SK-N-SH (cell line): ENCODE measurements at regions of chr4 and their contacts with region 1.

Region 1: DNA sequence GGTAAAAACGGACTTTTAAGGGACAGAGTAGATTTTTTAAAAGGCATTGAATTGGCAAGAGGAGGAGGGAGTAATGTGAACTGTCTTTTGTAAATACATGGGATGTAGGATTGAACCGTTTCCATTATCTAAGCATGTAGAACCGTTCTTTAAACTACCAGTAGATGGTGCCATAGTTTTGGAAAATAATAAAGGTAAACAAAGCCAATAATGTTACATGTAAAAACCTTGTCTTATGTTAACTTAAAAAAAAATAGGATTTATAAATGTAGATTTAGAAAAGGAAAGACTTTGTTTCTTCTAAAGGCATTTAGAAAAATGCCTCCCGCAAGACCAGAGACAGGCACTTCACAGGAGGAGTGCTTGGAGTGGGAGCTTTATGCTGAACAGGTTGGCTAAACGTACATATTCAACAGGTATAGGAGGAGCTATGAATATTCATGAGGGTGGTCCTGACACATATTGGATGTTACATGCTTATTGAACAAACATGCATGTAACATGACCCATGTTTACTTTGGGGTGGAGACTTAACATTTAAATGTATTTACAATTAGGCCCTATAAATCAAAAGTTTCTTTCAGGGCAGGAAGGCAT is 45.5 kb upstream of the FAM241A start:
- DNase-seq: peak; percentile 52
- H3K4me3 ChIP-seq: no peak overlapping the region
- H3K27ac ChIP-seq: no peak overlapping the region
- H3K4me1 ChIP-seq: no peaks in the 10 kb centered on the region
- H3K27me3 ChIP-seq: no peaks in the 10 kb centered on the region
- CTCF ChIP-seq: peak; percentile 81
- EP300 ChIP-seq: no peak
- RAD21 ChIP-seq: peak; percentile 82

Region 2: GRCh38 chr4:112136551-112136950 is 36.8 kb after region 1 on chr4:
- CTCF ChIA-PET with region 1: interaction called, 15 read pairs
- POLR2A ChIA-PET with region 1: no interaction called
- DNase-seq: no peak
- H3K4me3 ChIP-seq: no peak overlapping the region
- H3K27ac ChIP-seq: no peak overlapping the region
- H3K4me1 ChIP-seq: no peaks in the 10 kb centered on the region
- H3K27me3 ChIP-seq: no peaks in the 10 kb centered on the region
- CTCF ChIP-seq: no peak
- EP300 ChIP-seq: no peak
- RAD21 ChIP-seq: no peak

Region 3: DNA sequence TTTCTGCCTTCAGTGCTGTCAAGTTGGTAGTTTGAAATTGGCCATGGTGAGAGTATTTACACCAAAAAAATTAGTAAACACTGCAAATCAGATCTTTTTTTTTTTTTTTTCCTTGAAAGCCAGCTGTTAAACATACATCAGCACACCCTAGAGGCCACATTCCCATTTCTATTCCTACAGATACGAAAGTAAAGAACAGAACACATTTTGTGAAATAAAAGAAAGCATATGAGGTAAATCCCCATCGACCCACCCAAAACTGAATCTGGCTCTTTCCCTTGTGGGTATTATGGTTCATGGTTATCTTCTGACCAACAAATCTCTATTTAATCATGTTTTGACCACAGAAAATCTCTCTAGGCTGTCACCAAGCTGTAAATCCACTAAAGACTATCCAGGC is 90.0 kb after region 1 on chr4:
- CTCF ChIA-PET with region 1: interaction called, 14 read pairs
- POLR2A ChIA-PET with region 1: no interaction called
- DNase-seq: peak; percentile 30
- H3K4me3 ChIP-seq: no peak overlapping the region
- H3K27ac ChIP-seq: no peak overlapping the region
- H3K4me1 ChIP-seq: no peaks in the 10 kb centered on the region; a peak in 1 of 4 replicates
- H3K27me3 ChIP-seq: no peaks in the 10 kb centered on the region
- CTCF ChIP-seq: peak; percentile 39
- EP300 ChIP-seq: no peak
- RAD21 ChIP-seq: peak; percentile 50

Region 4: GRCh38 chr4:112231779-112232713 is 132.2 kb after region 1 on chr4 and contains the start of gene AP1AR:
- CTCF ChIA-PET with region 1: interaction called, 74 read pairs
- POLR2A ChIA-PET with region 1: no interaction called
- DNase-seq: peak; percentile 92
- H3K4me3 ChIP-seq: peak within 1 kb of the TSS; percentile 87 to 97
- H3K27ac ChIP-seq: peak within 1 kb of the TSS; percentile 96 to 98
- H3K4me1 ChIP-seq: peaks cover 7 to 9% of the 10 kb centered on the region in 2 experiments; a peak in 3 of 4 replicates
- H3K27me3 ChIP-seq: no peaks in the 10 kb centered on the region
- CTCF ChIP-seq: peak; percentile 49
- EP300 ChIP-seq: no peak
- RAD21 ChIP-seq: peak; percentile 23; the same call in 1 of the 2 replicates
- polyA plus RNA-seq, gene AP1AR: 8.5 and 11.4 TPM in 2 replicates

Region 5: DNA sequence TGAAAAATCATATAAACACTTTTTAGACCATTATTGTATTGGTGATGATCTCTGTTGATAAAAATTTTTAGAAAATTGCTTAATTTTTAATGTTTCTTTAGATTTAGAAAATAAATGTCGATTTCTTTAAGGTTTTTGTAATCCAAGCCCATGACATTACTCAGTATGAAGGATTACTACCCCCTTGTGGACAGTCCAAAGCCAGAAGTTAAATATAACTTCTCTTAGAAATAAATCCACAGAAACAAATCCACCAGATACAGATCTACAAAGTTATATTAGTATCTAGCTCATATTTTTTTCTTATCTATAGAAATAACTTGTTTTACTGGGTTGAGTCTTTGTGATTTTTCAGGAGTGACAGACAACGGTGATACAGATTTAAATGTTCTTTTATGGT is 167.0 kb after region 1 on chr4:
- CTCF ChIA-PET with region 1: interaction called, 18 read pairs
- POLR2A ChIA-PET with region 1: no interaction called
- DNase-seq: peak; percentile 12
- H3K4me3 ChIP-seq: no peak overlapping the region
- H3K27ac ChIP-seq: no peak overlapping the region
- H3K4me1 ChIP-seq: peaks cover 0 to 2% of the 10 kb centered on the region in 2 experiments; a peak in 1 of 4 replicates
- H3K27me3 ChIP-seq: no peaks in the 10 kb centered on the region
- CTCF ChIP-seq: peak; percentile 70
- EP300 ChIP-seq: no peak
- RAD21 ChIP-seq: peak; percentile 51

Region 6: DNA sequence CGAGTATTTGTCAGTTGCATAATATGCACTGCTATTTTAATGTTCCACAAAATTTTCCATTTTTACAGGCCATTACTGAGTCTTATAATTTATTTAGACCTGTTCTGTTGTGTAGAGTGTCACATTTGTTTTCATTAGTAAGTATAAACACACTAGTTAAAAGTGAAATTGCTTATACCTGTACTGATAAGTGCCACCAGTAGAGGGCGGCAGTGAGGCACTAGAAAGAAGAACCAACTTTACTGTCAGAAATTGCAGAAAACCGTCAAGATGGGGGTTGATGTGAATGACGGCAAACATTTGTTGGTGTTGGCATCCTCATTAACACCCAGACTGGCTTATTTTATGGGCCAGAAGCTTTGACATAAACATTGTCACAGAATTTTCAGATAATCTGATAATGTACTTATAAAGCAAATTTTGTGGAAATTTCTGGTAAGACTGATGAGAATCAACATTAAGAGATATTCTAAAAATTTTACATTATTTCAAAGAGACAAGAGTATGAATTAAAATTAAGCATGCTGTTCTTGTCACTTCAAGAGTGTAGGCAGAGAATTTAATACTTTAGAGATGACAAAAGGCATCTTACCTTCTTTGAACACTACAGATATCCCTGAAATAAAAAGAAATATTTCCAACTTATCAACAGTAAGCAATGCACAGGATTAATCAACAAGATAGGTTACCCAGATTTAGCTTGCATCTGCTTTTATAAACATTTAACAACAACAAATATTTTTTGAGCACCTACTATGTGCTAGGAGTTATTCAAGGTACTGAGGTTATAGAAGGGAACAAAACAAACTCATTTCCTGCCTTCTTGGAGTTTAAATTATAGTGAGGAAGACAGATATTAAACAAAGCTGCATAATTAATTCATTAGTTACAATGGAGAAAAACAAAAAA is 222.2 kb after region 1 on chr4:
- CTCF ChIA-PET with region 1: interaction called, 16 read pairs
- POLR2A ChIA-PET with region 1: no interaction called
- DNase-seq: peak; percentile 44
- H3K4me3 ChIP-seq: no peak overlapping the region; a peak in 2 of 4 replicates
- H3K27ac ChIP-seq: no peak overlapping the region
- H3K4me1 ChIP-seq: peaks cover 0 to 12% of the 10 kb centered on the region in 2 experiments; a peak in 2 of 4 replicates
- H3K27me3 ChIP-seq: no peaks in the 10 kb centered on the region
- CTCF ChIP-seq: peak; percentile 98
- EP300 ChIP-seq: no peak
- RAD21 ChIP-seq: peak; percentile 71

Region 7: GRCh38 chr4:112604589-112604988 is 504.8 kb after region 1 on chr4:
- CTCF ChIA-PET with region 1: interaction called, 10 read pairs
- POLR2A ChIA-PET with region 1: no interaction called
- DNase-seq: peak; percentile 62
- H3K4me3 ChIP-seq: no peak overlapping the region
- H3K27ac ChIP-seq: no peak overlapping the region
- H3K4me1 ChIP-seq: no peaks in the 10 kb centered on the region
- H3K27me3 ChIP-seq: no peaks in the 10 kb centered on the region
- CTCF ChIP-seq: peak; percentile 81
- EP300 ChIP-seq: no peak
- RAD21 ChIP-seq: peak; percentile 97